ENCODE measurements at regions of chr22 and their contacts with region 1.

Region 1: DNA sequence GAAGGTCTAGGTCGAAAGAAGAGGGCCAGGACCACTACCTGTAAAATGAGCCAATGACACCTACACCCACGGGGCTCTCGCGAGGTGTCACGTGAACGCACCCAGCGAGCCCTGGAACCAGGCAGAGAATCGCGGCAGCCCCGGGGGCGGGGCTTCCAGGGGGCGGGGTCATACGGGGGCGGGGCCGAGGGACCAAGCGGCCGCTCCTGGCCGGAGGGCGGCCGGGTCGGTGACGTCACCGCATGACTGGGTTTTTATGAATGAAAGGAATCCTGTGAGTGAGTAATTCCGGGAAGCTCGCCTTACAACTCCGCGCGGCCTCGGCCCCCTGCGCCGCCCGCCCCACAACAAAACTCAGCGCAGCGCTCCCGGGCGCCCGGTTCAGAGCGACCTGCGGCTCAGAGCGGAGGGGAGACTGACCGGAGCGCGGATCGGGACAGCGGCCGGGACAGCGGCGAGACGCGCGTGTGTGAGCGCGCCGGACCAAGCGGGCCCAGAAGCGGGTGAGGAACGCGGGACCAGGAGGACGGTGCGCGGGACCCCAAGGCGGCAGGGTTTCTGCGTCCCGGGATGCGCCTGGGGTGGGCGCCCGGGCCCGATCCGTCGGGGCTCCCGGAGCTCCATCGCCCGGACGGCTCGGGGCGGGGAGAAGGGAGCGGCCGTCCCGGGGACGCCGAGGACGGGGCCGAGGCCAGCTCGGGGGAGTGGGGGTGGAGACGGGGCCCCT is at the start of gene MAFF:
- DNase-seq: peak; percentile 98
- ATAC-seq: peak; percentile 82
- H3K4me3 ChIP-seq: peak within 1 kb of the TSS; percentile 67
- H3K27ac ChIP-seq: peak within 1 kb of the TSS; percentile 96
- H3K4me1 ChIP-seq: peaks cover 24% of the 10 kb centered on the region
- H3K27me3 ChIP-seq: no peaks in the 10 kb centered on the region
- CTCF ChIP-seq: no peak
- POLR2A ChIP-seq: peak; percentile 99
- RAD21 ChIP-seq: peak; percentile 18
- total RNA-seq, gene MAFF: 18.3 and 24.2 TPM in 2 replicates

Region 2: DNA sequence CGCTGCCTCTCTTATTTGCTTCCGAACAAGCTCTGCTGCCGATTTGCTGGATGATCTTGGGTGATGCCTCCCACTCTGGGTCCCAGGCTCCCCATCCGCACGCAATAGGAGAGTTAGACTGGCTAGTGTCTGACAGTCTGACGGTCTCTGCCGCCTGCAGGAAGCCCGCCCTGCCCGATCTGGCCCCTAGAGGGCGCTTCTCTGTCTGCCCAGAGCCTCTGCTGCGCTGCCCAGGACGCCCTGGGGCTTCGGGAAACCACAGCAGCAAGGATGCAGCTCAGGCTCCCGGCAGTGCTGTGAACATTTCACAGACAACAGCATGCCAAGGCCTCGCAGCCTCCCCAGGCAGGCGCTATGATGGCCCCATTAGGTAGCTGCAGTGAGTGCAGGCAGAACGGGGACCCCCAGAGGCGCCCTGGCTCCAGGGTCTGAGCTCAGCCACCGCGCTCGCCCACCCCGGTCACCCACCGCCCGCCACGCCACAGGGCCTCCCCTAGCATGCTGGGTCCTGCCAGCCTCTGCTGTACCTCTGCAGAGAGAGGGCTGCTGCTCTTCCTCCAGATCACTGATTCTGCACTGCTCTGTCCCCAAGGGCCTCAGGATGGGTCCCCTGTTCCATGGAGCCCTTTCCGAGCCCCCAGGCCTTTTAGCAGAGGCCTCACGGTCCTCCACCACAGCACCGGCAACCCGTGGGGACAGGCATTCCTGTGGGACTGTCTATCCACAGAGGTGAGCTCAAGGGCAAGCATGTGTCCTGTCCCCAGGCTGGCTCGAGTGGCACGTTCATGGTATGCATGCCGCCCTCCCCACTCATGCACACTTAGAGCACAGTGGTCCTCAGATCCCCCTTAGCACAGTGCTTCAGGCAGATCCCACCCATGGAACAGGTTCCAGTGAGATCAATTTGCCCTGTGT is 87.1 kb before region 1 on chr22:
- CTCF ChIA-PET with region 1: interaction called, 5 read pairs
- POLR2A ChIA-PET with region 1: no interaction called
- dilution Hi-C with region 1: no loop called
- in situ Hi-C with region 1: no loop called
- intact Hi-C with region 1: loop called (anchors 2 kb)
- DNase-seq: peak; percentile 78
- ATAC-seq: peak; percentile 99
- H3K4me3 ChIP-seq: no peak overlapping the region
- H3K27ac ChIP-seq: no peak overlapping the region
- H3K4me1 ChIP-seq: no peaks in the 10 kb centered on the region; the same call in 1 of the 2 replicates
- H3K27me3 ChIP-seq: peaks cover 2% of the 10 kb centered on the region; the same call in 1 of the 2 replicates
- CTCF ChIP-seq: peak; percentile 96
- POLR2A ChIP-seq: no peak
- RAD21 ChIP-seq: peak; percentile 91

Region 3: GRCh38 chr22:38181453-38182247 is 20.2 kb before region 1 on chr22 and contains the start of gene PLA2G6:
- CTCF ChIA-PET with region 1: no interaction called
- POLR2A ChIA-PET with region 1: no interaction called
- dilution Hi-C with region 1: no loop called
- in situ Hi-C with region 1: no loop called
- intact Hi-C with region 1: loop called (anchors 2 kb)
- DNase-seq: peak; percentile 98
- ATAC-seq: peak; percentile 95
- H3K4me3 ChIP-seq: peak within 1 kb of the TSS; percentile 50
- H3K27ac ChIP-seq: peak within 1 kb of the TSS; percentile 87
- H3K4me1 ChIP-seq: peaks cover 22% of the 10 kb centered on the region
- H3K27me3 ChIP-seq: no peaks in the 10 kb centered on the region
- CTCF ChIP-seq: no peak
- POLR2A ChIP-seq: 0 out of 2 replicates have a peak, but pooled peaks have one; percentile 37
- RAD21 ChIP-seq: no peak
- total RNA-seq, gene PLA2G6: 3.9 and 6.1 TPM in 2 replicates